ENCODE measurements at regions of chr1 and their contacts with region 1.

Region 1: GRCh38 chr1:226939438-226940028 is 561 bp upstream of the COQ8A start:
- DNase-seq: peak in 1 of 2 experiments; percentile 44
- H3K4me3 ChIP-seq: peak overlapping the region; percentile 69
- H3K27ac ChIP-seq: peak overlapping the region; percentile 87
- H3K4me1 ChIP-seq: peaks cover 19% of the 10 kb centered on the region
- H3K27me3 ChIP-seq: no peaks in the 10 kb centered on the region
- CTCF ChIP-seq: no peak

Region 2: GRCh38 chr1:226602186-226603021 is 337.1 kb before region 1 on chr1:
- CTCF ChIA-PET with region 1: no interaction called
- POLR2A ChIA-PET with region 1: no interaction called
- intact Hi-C with region 1: no loop called
- DNase-seq: no peak
- H3K4me3 ChIP-seq: no peak overlapping the region
- H3K27ac ChIP-seq: no peak overlapping the region
- H3K4me1 ChIP-seq: no peaks in the 10 kb centered on the region
- H3K27me3 ChIP-seq: peaks cover 60% of the 10 kb centered on the region
- CTCF ChIP-seq: no peak

Region 3: GRCh38 chr1:226634166-226634588 is 305.4 kb before region 1 on chr1:
- CTCF ChIA-PET with region 1: no interaction called
- POLR2A ChIA-PET with region 1: no interaction called
- intact Hi-C with region 1: no loop called
- DNase-seq: peak in 1 of 2 experiments; percentile 75
- H3K4me3 ChIP-seq: no peak overlapping the region
- H3K27ac ChIP-seq: no peak overlapping the region
- H3K4me1 ChIP-seq: peaks cover 22% of the 10 kb centered on the region
- H3K27me3 ChIP-seq: no peaks in the 10 kb centered on the region
- CTCF ChIP-seq: peak; percentile 96

Region 4: GRCh38 chr1:226863446-226863845 is 76.1 kb before region 1 on chr1:
- CTCF ChIA-PET with region 1: no interaction called
- POLR2A ChIA-PET with region 1: interaction called, 16 read pairs
- intact Hi-C with region 1: no loop called
- DNase-seq: no peak
- H3K4me3 ChIP-seq: no peak overlapping the region
- H3K27ac ChIP-seq: no peak overlapping the region
- H3K4me1 ChIP-seq: peaks cover 41% of the 10 kb centered on the region
- H3K27me3 ChIP-seq: no peaks in the 10 kb centered on the region
- CTCF ChIP-seq: no peak

Region 5: GRCh38 chr1:226875641-226876295 is 63.8 kb before region 1 on chr1:
- CTCF ChIA-PET with region 1: interaction called, 4 read pairs
- POLR2A ChIA-PET with region 1: interaction called, 4 read pairs
- intact Hi-C with region 1: loop called (anchors 5 kb)
- DNase-seq: peak; percentile 81 to 85
- H3K4me3 ChIP-seq: no peak overlapping the region
- H3K27ac ChIP-seq: peak overlapping the region; percentile 31
- H3K4me1 ChIP-seq: peaks cover 44% of the 10 kb centered on the region
- H3K27me3 ChIP-seq: no peaks in the 10 kb centered on the region
- CTCF ChIP-seq: no peak

Region 6: DNA sequence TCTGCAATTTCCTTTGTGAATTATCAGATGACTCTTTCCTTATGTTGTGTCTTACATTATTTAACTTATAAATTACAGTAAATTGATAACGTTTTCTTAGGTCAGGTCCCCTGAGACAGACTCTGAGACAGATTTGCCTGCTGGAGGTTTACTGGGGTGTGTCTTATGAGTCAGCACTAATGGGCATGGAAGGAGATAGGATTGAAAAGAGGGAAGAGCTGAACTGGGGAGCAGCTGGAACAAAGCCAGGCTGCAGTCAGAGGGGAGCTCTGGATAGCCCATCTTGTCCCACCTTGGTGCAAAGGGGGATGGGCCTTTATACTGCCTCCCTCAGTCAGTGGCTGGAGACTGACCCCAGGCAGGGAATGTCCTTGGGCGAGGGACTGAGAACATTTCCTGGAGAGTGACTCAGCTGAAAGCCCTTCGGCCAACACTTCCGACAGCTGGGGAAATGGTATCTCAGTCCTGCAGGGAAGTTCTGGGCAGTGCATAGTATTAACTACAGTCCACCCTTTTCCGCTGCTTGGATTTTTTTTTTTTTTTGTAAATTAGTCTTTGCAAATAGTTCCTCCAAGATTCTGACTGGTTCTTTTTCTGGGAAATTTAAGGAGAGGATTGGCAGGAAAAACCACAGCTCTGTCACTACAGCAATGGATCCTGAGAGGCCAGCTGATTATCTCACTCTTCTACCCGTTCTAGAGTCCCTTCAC is 417.8 kb after region 1 on chr1:
- CTCF ChIA-PET with region 1: no interaction called
- POLR2A ChIA-PET with region 1: no interaction called
- intact Hi-C with region 1: loop called (anchors 2 kb)
- DNase-seq: peak; percentile 83 to 89
- H3K4me3 ChIP-seq: peak overlapping the region; percentile 4; the same call in 1 of the 2 replicates
- H3K27ac ChIP-seq: peak overlapping the region; percentile 96
- H3K4me1 ChIP-seq: peaks cover 33% of the 10 kb centered on the region
- H3K27me3 ChIP-seq: no peaks in the 10 kb centered on the region
- CTCF ChIP-seq: no peak

Region 7: DNA sequence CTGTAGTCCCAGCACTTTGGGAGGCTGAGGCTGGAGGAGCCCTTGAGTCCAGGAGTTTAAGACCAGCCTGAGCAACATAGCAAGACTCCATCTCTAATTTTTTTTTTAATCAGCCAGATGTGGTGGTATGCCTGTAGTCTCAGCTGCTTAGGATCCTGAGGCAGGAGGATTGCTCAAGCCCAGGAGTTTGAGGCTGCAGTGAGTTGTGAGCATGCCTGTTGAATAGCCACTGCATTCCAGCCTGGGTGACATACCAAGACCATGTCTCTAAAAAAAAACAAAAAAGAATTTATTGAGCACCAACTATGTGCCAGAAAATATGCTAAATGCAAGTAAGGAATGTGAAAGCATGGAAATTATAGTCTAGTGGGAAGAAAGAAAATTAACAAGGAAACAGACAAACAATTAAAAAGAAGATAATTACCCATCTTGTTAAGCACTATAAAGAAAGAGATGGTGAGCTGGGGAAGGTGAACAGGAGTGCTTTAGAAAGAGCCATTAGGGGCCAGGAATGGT is 519.9 kb after region 1 on chr1:
- CTCF ChIA-PET with region 1: no interaction called
- POLR2A ChIA-PET with region 1: no interaction called
- intact Hi-C with region 1: no loop called
- DNase-seq: no peak
- H3K4me3 ChIP-seq: no peak overlapping the region
- H3K27ac ChIP-seq: no peak overlapping the region
- H3K4me1 ChIP-seq: no peaks in the 10 kb centered on the region
- H3K27me3 ChIP-seq: peaks cover 21% of the 10 kb centered on the region
- CTCF ChIP-seq: no peak

Region 8: GRCh38 chr1:227490478-227490877 is 550.9 kb after region 1 on chr1:
- CTCF ChIA-PET with region 1: no interaction called
- POLR2A ChIA-PET with region 1: no interaction called
- intact Hi-C with region 1: no loop called
- DNase-seq: no peak
- H3K4me3 ChIP-seq: no peak overlapping the region
- H3K27ac ChIP-seq: no peak overlapping the region
- H3K4me1 ChIP-seq: no peaks in the 10 kb centered on the region
- H3K27me3 ChIP-seq: no peaks in the 10 kb centered on the region
- CTCF ChIP-seq: no peak

Measured in PC-9 (cell line).